ENCODE measurements at regions of chr2 and their contacts with region 1.

Region 1: DNA sequence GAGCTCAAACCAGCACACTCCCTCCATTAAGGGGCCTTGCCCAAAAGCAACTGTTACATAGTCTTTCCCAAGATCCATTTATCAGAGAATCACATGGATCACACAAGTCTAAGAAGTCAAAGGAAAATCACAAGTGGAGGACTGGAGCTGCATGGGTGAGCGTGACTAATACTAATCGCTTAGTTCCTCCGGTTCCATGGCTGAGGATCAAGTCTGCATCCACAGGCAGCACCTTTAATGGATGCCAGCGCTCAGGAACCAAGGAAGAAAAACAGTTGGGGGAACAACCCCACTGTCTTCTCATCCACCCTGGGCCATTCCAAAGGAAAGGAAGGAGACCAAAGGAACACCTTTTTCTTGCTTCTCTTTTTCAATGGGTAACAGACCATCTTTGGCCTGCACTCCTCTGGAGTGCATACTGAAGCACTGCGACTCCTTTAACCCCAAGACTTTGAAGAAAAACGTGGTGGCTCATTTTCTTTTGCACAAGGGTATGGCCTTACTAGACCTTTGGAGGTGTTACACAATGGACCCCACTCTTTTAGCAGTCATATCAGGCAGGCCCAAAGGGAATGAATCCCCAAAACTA is 9.2 kb upstream of the WDR33 start:
- DNase-seq: no peak
- ATAC-seq: no peak
- H3K4me3 ChIP-seq: no peak overlapping the region
- H3K27ac ChIP-seq: no peak overlapping the region
- H3K4me1 ChIP-seq: no peaks in the 10 kb centered on the region
- H3K27me3 ChIP-seq: no peaks in the 10 kb centered on the region
- CTCF ChIP-seq: no peak

Region 2: GRCh38 chr2:127847931-127848330 is 27.8 kb after region 1 on chr2:
- intact Hi-C with region 1: loop called in 1 of 3 experiments (anchors 2 kb)
- DNase-seq: no peak
- ATAC-seq: no peak
- H3K4me3 ChIP-seq: no peak overlapping the region
- H3K27ac ChIP-seq: no peak overlapping the region
- H3K4me1 ChIP-seq: no peaks in the 10 kb centered on the region
- H3K27me3 ChIP-seq: no peaks in the 10 kb centered on the region
- CTCF ChIP-seq: no peak

Region 3: DNA sequence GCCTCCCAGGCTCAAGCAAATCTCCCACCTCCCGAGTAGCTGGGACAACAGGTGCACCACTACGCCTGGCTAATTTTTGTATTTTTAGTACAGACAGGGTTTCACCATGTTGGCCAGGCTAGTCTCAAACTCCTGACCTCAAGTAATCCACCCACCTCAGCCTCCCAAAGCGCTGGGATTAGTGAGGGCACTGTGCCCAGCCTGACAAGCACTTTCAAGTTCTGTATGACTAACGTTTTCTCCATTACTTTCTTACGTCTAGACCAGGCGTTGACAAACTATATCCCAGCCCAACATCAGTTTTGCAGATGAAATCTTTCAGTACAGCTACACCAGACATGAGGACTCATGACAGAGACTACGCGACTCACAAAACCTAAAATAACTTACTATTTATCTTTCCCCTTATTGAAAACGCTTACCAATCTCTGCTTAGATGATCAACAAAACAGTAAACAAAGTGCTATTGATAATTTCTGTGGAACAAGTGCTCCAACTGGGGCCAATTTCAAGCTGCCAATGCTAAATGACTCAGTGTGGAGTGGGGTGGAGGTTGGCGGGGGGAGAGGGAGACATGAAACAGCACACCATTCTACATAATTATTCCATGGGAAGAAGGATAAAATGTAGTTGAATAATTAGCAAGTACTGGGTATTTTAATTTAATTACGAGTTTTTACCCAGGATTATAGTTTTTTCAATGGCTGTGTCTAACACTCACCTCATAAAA is 148.6 kb after region 1 on chr2:
- intact Hi-C with region 1: no loop called
- DNase-seq: no peak
- ATAC-seq: no peak
- H3K4me3 ChIP-seq: no peak overlapping the region
- H3K27ac ChIP-seq: no peak overlapping the region
- H3K4me1 ChIP-seq: peaks cover 0 to 4% (median 0%) of the 10 kb centered on the region in 3 donors
- H3K27me3 ChIP-seq: no peaks in the 10 kb centered on the region
- CTCF ChIP-seq: no peak

Region 4: GRCh38 chr2:128103407-128103806 is 283.2 kb after region 1 on chr2:
- intact Hi-C with region 1: no loop called
- DNase-seq: no peak
- ATAC-seq: no peak
- H3K4me3 ChIP-seq: no peak overlapping the region
- H3K27ac ChIP-seq: no peak overlapping the region
- H3K4me1 ChIP-seq: no peaks in the 10 kb centered on the region
- H3K27me3 ChIP-seq: no peaks in the 10 kb centered on the region
- CTCF ChIP-seq: no peak

Measured in pancreas (tissue), 10 donors.